Breast epithelium (tissue), 4 donors: ENCODE measurements at regions of chr15 and their contacts with region 1.

Region 1: DNA sequence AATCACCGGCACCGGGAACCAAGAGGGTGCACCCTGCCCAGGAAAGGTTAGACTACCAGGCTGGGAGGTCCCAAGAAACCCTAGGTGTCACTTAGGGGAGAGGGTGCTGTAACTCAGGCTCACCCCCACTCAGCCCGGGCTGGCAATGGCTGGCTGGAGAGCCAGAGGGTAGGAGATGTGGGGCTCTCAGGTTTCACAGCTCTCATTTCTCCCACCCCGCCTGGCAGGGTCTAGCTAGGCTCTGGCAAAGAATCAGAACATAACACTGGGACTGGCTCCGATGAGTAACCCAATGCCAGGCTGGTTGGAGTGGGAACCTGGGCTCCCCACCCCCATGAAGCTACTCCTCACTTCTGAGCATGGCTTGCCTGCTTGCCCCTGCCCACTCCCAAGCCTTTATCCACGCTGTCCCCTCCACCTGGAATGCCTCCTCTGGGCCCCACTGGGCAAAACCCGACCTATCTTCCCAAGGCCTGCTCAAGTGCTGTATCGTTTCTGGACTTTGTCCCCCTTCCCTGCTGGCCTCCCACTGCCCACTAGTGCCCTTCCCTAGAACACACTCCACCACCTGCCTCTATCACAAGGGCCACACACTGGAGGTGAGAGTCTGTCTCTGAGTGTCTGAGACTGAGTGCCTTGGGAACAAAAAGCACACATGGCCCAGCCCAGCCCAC is 2.0 kb downstream of the CIB2 start:
- DNase-seq: no peak
- H3K4me3 ChIP-seq: no peak overlapping the region
- H3K27ac ChIP-seq: peak overlapping the region in 1 of 2 donors; percentile 46
- H3K4me1 ChIP-seq: no peaks in the 10 kb centered on the region
- H3K27me3 ChIP-seq: no peaks in the 10 kb centered on the region
- CTCF ChIP-seq: no peak
- POLR2A ChIP-seq: no peak

Region 2: GRCh38 chr15:78234515-78235040 is 105.4 kb after region 1 on chr15 and contains the start of gene ACSBG1:
- intact Hi-C with region 1: loop called (anchors 10 kb)
- DNase-seq: peak in 1 of 2 donors; percentile 36
- H3K4me3 ChIP-seq: no peak within 1 kb of the TSS
- H3K27ac ChIP-seq: no peak within 1 kb of the TSS
- H3K4me1 ChIP-seq: no peaks in the 10 kb centered on the region
- H3K27me3 ChIP-seq: peaks cover 0 to 10% of the 10 kb centered on the region in 2 donors
- CTCF ChIP-seq: no peak
- POLR2A ChIP-seq: no peak
- total RNA-seq, gene ACSBG1: 1.9 to 2.0 TPM in 2 of 3 donors, not detected in the other

Region 3: GRCh38 chr15:78308422-78309032 is 179.3 kb after region 1 on chr15:
- intact Hi-C with region 1: no loop called
- DNase-seq: peak in 1 of 2 donors; percentile 26
- H3K4me3 ChIP-seq: no peak overlapping the region
- H3K27ac ChIP-seq: no peak overlapping the region
- H3K4me1 ChIP-seq: no peaks in the 10 kb centered on the region
- H3K27me3 ChIP-seq: peaks cover 4 to 13% of the 10 kb centered on the region in 2 donors
- CTCF ChIP-seq: peak; percentile 28 to 81 (median 73)
- POLR2A ChIP-seq: no peak